Posterior vena cava (tissue), 2 donors: ENCODE measurements at regions of chr3 and their contacts with region 1.

Region 1: DNA sequence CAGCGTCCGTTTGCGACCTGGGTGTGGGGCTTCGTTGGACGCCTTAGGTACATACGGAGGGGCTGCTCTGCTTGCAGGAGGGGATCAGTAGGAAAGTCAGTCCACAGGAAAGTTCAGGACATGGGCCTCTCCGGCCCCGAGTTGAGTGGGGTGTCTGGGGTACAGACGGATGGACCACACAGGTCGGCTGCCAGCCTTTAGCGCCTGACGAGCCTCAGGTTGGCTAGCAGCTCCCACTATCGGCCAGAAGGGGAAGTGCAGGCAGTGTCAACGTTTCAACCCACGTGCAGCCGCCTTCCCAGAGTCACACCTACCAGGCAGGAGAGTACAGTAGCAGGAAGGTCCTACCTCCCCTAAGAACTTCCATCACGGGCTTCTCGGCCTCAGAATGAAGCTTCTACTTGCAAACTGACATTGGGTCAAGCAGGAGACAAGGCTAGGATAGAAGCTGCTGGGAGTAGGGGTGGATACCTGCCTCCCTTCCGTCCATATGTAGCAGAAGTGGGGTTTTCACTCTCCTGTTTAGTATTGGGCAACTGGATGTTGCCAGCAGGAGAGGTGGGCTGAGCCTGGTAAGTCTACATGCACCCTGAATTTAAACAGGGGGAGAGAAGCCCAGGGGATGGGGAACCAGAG is 1.8 kb upstream of the SCN5A start:
- DNase-seq: no peak

Region 2: DNA sequence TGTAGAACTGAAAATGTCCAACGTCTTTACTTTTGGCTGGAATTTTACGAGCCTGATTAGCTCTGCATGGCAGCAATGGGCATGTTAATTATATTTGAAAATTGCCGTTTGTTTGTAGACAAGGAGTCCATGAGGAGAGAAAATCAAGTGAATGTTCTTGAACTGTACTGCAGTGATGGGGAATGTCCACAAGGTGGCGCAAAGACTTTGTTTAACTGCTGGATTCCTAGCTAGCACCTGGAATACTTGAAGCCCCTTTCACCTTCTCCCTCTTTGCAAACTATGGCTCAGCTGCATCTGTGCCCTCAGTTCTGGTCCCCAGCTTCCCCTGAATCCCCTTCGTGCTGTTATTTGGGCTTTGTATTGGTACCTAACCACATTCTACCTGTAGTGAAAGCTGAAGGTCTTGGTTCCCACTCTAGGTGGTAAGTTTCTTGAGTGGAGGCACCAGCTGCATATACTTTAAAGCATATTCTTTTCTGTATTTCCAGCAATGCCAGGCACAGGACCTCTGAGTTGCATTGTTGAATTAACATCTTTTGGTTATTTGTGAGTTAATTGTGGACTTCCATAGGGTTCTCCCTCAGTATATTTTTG is 129.8 kb before region 1 on chr3:
- intact Hi-C with region 1: loop called (anchors 5 to 10 kb)
- DNase-seq: no peak

Region 3: GRCh38 chr3:38528457-38528856 is 122.8 kb before region 1 on chr3:
- intact Hi-C with region 1: loop called (anchors 5 to 10 kb)
- DNase-seq: no peak